HCT116 (cell line): ENCODE measurements at regions of chr11 and their contacts with region 1.

Region 1: DNA sequence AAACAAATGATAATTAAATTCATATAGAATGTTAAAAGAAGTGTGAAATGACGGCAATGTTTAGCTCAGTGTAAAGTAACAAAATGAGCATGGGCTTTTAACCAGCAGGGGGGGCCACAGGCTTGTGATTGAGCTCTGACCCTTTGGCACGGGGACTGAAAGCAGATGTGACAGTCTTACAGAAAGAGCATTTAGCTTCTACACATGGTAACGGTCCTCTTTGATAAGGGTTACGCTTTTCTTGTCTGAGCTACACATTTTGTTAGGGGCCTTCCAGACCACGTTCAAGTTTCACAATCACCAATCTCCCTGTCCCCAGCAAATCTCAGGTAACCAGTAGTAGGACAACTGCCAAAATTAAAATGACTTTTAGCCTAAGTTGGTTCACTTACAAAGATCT is 262.5 kb downstream of the DCDC1 start:
- DNase-seq: peak; percentile 51
- ATAC-seq: peak; percentile 89
- H3K4me3 ChIP-seq: no peak overlapping the region
- H3K27ac ChIP-seq: no peak overlapping the region
- H3K4me1 ChIP-seq: no peaks in the 10 kb centered on the region
- H3K27me3 ChIP-seq: no peaks in the 10 kb centered on the region
- CTCF ChIP-seq: peak; percentile 67 to 86 (median 72)
- POLR2A ChIP-seq: no peak
- RAD21 ChIP-seq: peak; percentile 83

Region 2: GRCh38 chr11:30936491-30936890 is 170.6 kb before region 1 on chr11:
- CTCF ChIA-PET with region 1: no interaction called
- POLR2A ChIA-PET with region 1: no interaction called
- RAD21 ChIA-PET with region 1: no interaction called
- intact Hi-C with region 1: no loop called
- DNase-seq: no peak
- ATAC-seq: no peak
- H3K4me3 ChIP-seq: no peak overlapping the region
- H3K27ac ChIP-seq: no peak overlapping the region
- H3K4me1 ChIP-seq: no peaks in the 10 kb centered on the region
- H3K27me3 ChIP-seq: 0 out of 2 replicates have a peak, but pooled peaks cover 8% of the 10 kb centered on the region
- CTCF ChIP-seq: no peak
- POLR2A ChIP-seq: no peak
- RAD21 ChIP-seq: no peak

Region 3: DNA sequence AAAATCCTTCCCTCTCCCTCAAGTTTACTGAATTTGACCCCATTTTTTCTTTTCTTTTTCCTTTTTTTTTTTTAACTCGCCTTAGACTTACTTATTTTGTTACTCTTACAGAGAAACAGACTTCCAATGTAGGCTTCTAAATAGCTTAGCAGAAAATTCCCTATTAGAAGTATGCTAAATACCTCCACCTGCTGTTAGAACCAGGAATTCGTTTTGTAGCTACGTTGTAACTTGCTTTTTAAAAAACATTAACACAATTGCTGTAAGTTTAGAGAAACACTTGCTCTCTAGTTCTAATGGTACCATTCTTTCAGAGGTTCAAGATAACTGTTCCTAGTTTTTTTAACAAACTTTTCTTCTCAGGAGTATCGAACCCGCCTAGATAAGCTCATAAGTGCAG is 61.7 kb before region 1 on chr11:
- CTCF ChIA-PET with region 1: interaction called, 11 read pairs
- POLR2A ChIA-PET with region 1: no interaction called
- RAD21 ChIA-PET with region 1: no interaction called
- intact Hi-C with region 1: no loop called
- DNase-seq: peak; percentile 10
- ATAC-seq: no peak
- H3K4me3 ChIP-seq: no peak overlapping the region
- H3K27ac ChIP-seq: no peak overlapping the region
- H3K4me1 ChIP-seq: no peaks in the 10 kb centered on the region
- H3K27me3 ChIP-seq: no peaks in the 10 kb centered on the region; the same call in 1 of the 2 replicates
- CTCF ChIP-seq: peak; percentile 20 to 58 (median 32); a peak in 4 of 6 replicates
- POLR2A ChIP-seq: no peak
- RAD21 ChIP-seq: no peak

Region 4: DNA sequence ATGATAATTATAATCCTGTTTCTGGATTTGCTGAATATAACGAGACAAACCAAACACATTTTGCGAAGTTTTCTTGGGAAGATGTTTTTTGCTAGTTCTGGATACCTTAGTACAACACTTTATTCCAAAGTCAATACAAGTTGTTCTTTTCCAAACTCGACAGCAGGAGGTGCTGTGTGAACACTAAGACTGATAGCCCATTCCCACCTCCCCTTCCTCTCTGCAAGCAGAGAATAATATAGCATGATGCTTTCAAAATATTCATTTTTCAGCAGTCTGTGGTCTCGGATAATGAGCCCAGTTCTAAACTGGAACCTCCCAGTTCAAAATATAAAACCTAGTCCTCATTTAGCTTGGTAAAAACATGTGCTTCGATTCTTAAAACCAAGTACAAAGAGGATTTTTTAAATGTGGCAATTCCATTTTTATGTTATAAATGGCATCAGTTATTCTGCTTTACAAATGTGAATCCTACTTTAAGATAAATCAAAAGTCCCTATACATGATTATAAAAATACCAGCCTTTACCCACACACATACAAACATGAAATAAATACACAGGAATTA is 133.4 kb after region 1 on chr11:
- CTCF ChIA-PET with region 1: interaction called, 17 read pairs
- POLR2A ChIA-PET with region 1: no interaction called
- RAD21 ChIA-PET with region 1: no interaction called
- intact Hi-C with region 1: no loop called
- DNase-seq: peak; percentile 59
- ATAC-seq: peak; percentile 80
- H3K4me3 ChIP-seq: no peak overlapping the region
- H3K27ac ChIP-seq: no peak overlapping the region
- H3K4me1 ChIP-seq: no peaks in the 10 kb centered on the region
- H3K27me3 ChIP-seq: no peaks in the 10 kb centered on the region
- CTCF ChIP-seq: peak; percentile 48 to 72 (median 62); a peak in 5 of 6 replicates
- POLR2A ChIP-seq: no peak
- RAD21 ChIP-seq: peak; percentile 72

Region 5: DNA sequence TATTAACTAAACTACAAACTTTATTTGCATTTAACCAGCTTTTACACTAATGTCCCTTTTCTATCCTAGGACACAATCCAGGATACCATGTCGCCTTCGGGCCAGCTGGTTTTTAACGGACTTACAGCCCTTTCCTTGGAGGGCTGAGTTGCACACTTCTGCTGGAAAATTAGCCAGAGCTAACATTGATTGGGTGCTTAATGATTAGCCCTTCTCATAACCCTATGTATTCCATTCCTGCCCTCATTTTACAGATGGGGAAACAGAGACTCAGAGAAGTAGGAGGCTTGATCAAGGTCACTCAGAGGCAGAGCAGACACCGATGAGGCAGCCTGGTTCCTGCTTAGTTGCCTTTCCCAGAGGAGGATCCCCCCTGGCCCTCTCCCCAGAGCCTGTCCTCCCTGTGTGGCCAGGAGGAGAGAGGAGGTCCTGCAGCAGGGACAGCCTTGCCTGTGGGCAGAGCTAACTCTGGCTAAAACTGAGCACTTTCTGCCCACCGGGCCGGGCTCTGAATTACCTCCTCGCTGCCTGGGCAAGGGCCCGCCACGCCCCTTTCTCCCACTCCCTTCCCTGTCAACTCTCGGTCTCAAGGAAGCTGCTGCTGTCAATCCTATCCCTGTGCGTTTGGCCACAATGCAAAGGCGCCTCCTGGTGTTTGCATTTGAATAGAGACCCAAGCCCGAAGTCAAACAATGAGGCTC is 763.7 kb after region 1 on chr11:
- CTCF ChIA-PET with region 1: interaction called, 16 read pairs
- POLR2A ChIA-PET with region 1: no interaction called
- RAD21 ChIA-PET with region 1: interaction called in 1 of 2 experiments, 3 read pairs
- intact Hi-C with region 1: loop called (anchors 2 kb)
- DNase-seq: peak; percentile 48
- ATAC-seq: peak; percentile 87
- H3K4me3 ChIP-seq: no peak overlapping the region
- H3K27ac ChIP-seq: no peak overlapping the region
- H3K4me1 ChIP-seq: peaks cover 0 to 9% of the 10 kb centered on the region in 2 experiments; a peak in 2 of 4 replicates
- H3K27me3 ChIP-seq: no peaks in the 10 kb centered on the region
- CTCF ChIP-seq: peak; percentile 80 to 87 (median 81)
- POLR2A ChIP-seq: no peak
- RAD21 ChIP-seq: peak; percentile 93

Region 6: GRCh38 chr11:32297611-32298011 is 1190.5 kb after region 1 on chr11:
- CTCF ChIA-PET with region 1: interaction called, 8 read pairs
- POLR2A ChIA-PET with region 1: no interaction called
- RAD21 ChIA-PET with region 1: no interaction called
- intact Hi-C with region 1: loop called (anchors 1 kb)
- DNase-seq: peak; percentile 31
- ATAC-seq: peak; percentile 84
- H3K4me3 ChIP-seq: no peak overlapping the region
- H3K27ac ChIP-seq: no peak overlapping the region
- H3K4me1 ChIP-seq: no peaks in the 10 kb centered on the region
- H3K27me3 ChIP-seq: no peaks in the 10 kb centered on the region
- CTCF ChIP-seq: peak; percentile 26 to 58 (median 53); a peak in 4 of 6 replicates
- POLR2A ChIP-seq: no peak
- RAD21 ChIP-seq: peak; percentile 69